Activated naive CD4-positive, alpha-beta T cell treated with anti-CD3 and anti-CD28 coated beads for 36 hours (primary cell): ENCODE measurements at regions of chr10 and their contacts with region 1.

Region 1: GRCh38 chr10:62594093-62594520 is 210.4 kb upstream of the ADO start:
- DNase-seq: peak; percentile 66
- H3K4me3 Mint-ChIP-seq: no peak overlapping the region
- H3K27ac Mint-ChIP-seq: no peak overlapping the region
- H3K4me1 Mint-ChIP-seq: peaks cover 2% of the 10 kb centered on the region
- H3K27me3 Mint-ChIP-seq: peaks cover 7% of the 10 kb centered on the region

Region 2: GRCh38 chr10:62492012-62492869 is 101.9 kb before region 1 on chr10:
- CTCF ChIA-PET with region 1: interaction called, 4 read pairs
- intact Hi-C with region 1: loop called (anchors 5 kb)
- DNase-seq: peak; percentile 8
- H3K4me3 Mint-ChIP-seq: no peak overlapping the region
- H3K27ac Mint-ChIP-seq: no peak overlapping the region
- H3K4me1 Mint-ChIP-seq: no peaks in the 10 kb centered on the region
- H3K27me3 Mint-ChIP-seq: no peaks in the 10 kb centered on the region

Region 3: GRCh38 chr10:62980687-62981086 is 386.6 kb after region 1 on chr10:
- CTCF ChIA-PET with region 1: no interaction called
- intact Hi-C with region 1: loop called (anchors 5 kb)
- DNase-seq: peak; percentile 52
- H3K4me3 Mint-ChIP-seq: no peak overlapping the region
- H3K27ac Mint-ChIP-seq: peak overlapping the region; percentile 76
- H3K4me1 Mint-ChIP-seq: peaks cover 23% of the 10 kb centered on the region
- H3K27me3 Mint-ChIP-seq: peaks cover 8% of the 10 kb centered on the region

Region 4: GRCh38 chr10:63083904-63084689 is 490.0 kb after region 1 on chr10:
- CTCF ChIA-PET with region 1: interaction called, 23 read pairs
- intact Hi-C with region 1: loop called (anchors 1 kb)
- DNase-seq: peak; percentile 52
- H3K4me3 Mint-ChIP-seq: no peak overlapping the region
- H3K27ac Mint-ChIP-seq: no peak overlapping the region
- H3K4me1 Mint-ChIP-seq: no peaks in the 10 kb centered on the region
- H3K27me3 Mint-ChIP-seq: peaks cover 4% of the 10 kb centered on the region